HCT116 (cell line): ENCODE measurements at regions of chrX and their contacts with region 1.

Region 1: GRCh38 chrX:85544609-85545008 is 165.1 kb upstream of the POF1B start:
- DNase-seq: no peak
- ATAC-seq: no peak
- H3K4me3 ChIP-seq: no peak overlapping the region
- H3K27ac ChIP-seq: no peak overlapping the region
- H3K4me1 ChIP-seq: no peaks in the 10 kb centered on the region
- H3K27me3 ChIP-seq: no peaks in the 10 kb centered on the region
- CTCF ChIP-seq: 0 out of 6 replicates have a peak, but pooled peaks of 2 of the 3 experiments have one; percentile 12 to 20
- POLR2A ChIP-seq: no peak
- RAD21 ChIP-seq: peak; percentile 26; the same call in 1 of the 2 replicates

Region 2: DNA sequence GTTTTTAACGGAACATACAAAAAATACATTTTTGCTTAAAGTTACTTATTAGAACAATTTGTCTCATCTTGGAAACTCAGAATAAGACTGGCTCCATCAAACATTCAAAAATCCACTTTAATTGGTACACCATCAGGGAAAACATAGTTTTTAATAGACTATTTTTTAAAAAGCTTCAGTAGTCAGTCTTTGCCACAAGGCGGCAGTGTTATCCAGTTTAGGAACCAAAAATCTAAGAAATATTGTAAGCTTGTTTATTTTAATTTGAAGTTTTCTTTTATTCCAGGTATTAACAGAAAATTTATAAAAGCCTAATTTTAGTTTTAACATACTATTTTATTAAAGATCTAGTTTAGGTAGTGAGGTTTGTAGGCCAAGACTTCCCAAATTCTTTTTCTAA is 433.3 kb before region 1 on chrX:
- CTCF ChIA-PET with region 1: interaction called, 7 read pairs
- POLR2A ChIA-PET with region 1: no interaction called
- RAD21 ChIA-PET with region 1: no interaction called
- intact Hi-C with region 1: loop called (anchors 2 kb)
- DNase-seq: no peak
- ATAC-seq: no peak
- H3K4me3 ChIP-seq: no peak overlapping the region
- H3K27ac ChIP-seq: no peak overlapping the region
- H3K4me1 ChIP-seq: no peaks in the 10 kb centered on the region
- H3K27me3 ChIP-seq: no peaks in the 10 kb centered on the region
- CTCF ChIP-seq: peak; percentile 26 to 60 (median 40); a peak in 5 of 6 replicates
- POLR2A ChIP-seq: no peak
- RAD21 ChIP-seq: peak; percentile 39

Region 3: GRCh38 chrX:86121916-86122315 is 577.3 kb after region 1 on chrX:
- CTCF ChIA-PET with region 1: no interaction called
- POLR2A ChIA-PET with region 1: no interaction called
- RAD21 ChIA-PET with region 1: no interaction called
- intact Hi-C with region 1: no loop called
- DNase-seq: no peak
- ATAC-seq: no peak
- H3K4me3 ChIP-seq: no peak overlapping the region
- H3K27ac ChIP-seq: no peak overlapping the region
- H3K4me1 ChIP-seq: no peaks in the 10 kb centered on the region
- H3K27me3 ChIP-seq: no peaks in the 10 kb centered on the region
- CTCF ChIP-seq: no peak
- POLR2A ChIP-seq: no peak
- RAD21 ChIP-seq: no peak